Activated B cell treated with CpG ODN at 0.5 μM for 24 hours (primary cell): ENCODE measurements at regions of chr7 and their contacts with region 1.

Region 1: DNA sequence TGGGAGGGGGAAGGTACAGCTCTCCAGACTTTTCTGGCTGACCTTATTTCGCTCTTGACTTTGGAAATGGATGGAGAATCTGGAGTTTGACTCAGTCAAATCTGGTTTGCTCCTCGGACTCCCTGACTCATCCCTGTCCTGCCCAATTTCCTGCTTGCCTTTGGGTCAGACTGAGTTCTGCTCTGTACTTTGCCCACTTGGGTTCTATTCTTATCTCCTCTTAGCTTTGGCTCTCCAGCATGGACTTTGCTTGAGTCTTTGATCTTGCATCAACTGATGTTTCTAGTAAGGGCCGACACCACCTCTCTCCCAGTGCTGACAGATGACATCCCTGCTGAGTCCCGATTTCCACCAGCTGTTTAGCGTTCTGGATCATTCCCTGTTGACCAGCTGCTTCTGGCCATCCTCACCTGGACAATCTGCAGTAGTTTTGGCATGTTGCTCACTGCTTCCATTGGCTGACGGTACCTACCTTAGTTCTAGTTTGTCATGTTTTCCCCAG is 335.3 kb downstream of the SUGCT start:
- DNase-seq: no peak
- ATAC-seq: no peak
- H3K4me3 Mint-ChIP-seq: no peak overlapping the region
- H3K27ac Mint-ChIP-seq: no peak overlapping the region
- H3K4me1 Mint-ChIP-seq: no peaks in the 10 kb centered on the region
- H3K27me3 Mint-ChIP-seq: no peaks in the 10 kb centered on the region
- CTCF ChIP-seq: no peak

Region 2: GRCh38 chr7:39554583-39555165 is 915.5 kb before region 1 on chr7:
- CTCF ChIA-PET with region 1: no interaction called
- POLR2A ChIA-PET with region 1: no interaction called
- intact Hi-C with region 1: no loop called
- DNase-seq: no peak
- ATAC-seq: no peak
- H3K4me3 Mint-ChIP-seq: no peak overlapping the region
- H3K27ac Mint-ChIP-seq: no peak overlapping the region
- H3K4me1 Mint-ChIP-seq: no peaks in the 10 kb centered on the region
- H3K27me3 Mint-ChIP-seq: peaks cover 16% of the 10 kb centered on the region
- CTCF ChIP-seq: no peak

Region 3: GRCh38 chr7:40621592-40621998 is 151.5 kb after region 1 on chr7:
- CTCF ChIA-PET with region 1: no interaction called
- POLR2A ChIA-PET with region 1: interaction called, 12 read pairs
- intact Hi-C with region 1: no loop called
- DNase-seq: no peak
- ATAC-seq: no peak
- H3K4me3 Mint-ChIP-seq: no peak overlapping the region
- H3K27ac Mint-ChIP-seq: no peak overlapping the region
- H3K4me1 Mint-ChIP-seq: no peaks in the 10 kb centered on the region
- H3K27me3 Mint-ChIP-seq: peaks cover 5% of the 10 kb centered on the region
- CTCF ChIP-seq: no peak